ENCODE measurements at regions of chr5 and their contacts with region 1.

Region 1: GRCh38 chr5:67693956-67694809 is 497.6 kb upstream of the CD180 start:
- DNase-seq: peak; percentile 74 to 96
- H3K4me3 ChIP-seq: no peak overlapping the region
- H3K27ac ChIP-seq: peak overlapping the region; percentile 73 to 76
- H3K4me1 ChIP-seq: peaks cover 0 to 24% of the 10 kb centered on the region in 2 donors
- H3K27me3 ChIP-seq: no peaks in the 10 kb centered on the region
- CTCF ChIP-seq: no peak

Region 2: GRCh38 chr5:67246108-67246507 is 448.1 kb before region 1 on chr5:
- intact Hi-C with region 1: loop called (anchors 5 kb)
- DNase-seq: no peak
- H3K4me3 ChIP-seq: no peak overlapping the region
- H3K27ac ChIP-seq: peak overlapping the region in 1 of 2 donors; percentile 75
- H3K4me1 ChIP-seq: peaks cover 11 to 18% of the 10 kb centered on the region in 2 donors
- H3K27me3 ChIP-seq: no peaks in the 10 kb centered on the region
- CTCF ChIP-seq: peak; percentile 59 to 79 (median 67)

Region 3: DNA sequence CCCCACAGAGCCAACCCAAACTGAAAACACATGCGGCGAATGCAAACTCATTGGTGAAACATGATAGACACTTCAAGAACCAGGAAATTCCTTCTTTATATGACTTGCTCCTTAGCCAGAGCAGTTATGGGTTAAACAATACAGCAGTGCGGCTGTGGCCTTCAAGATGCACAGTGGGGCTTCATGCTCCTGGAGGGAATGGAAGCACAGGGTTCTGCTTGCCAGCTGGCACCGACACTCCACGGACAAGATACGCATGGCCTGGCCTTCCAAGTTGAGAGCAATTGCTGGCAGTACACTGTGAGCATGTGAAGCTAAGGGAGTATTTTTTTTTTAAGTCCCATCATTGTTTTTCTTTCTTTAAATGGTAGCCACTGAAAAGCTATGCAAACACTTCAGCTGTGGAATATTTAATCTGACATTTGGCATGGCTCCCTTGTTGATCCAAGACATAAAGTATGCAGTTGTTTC is 45.9 kb before region 1 on chr5:
- intact Hi-C with region 1: loop called (anchors 1 kb)
- DNase-seq: peak in 1 of 2 donors; percentile 79
- H3K4me3 ChIP-seq: no peak overlapping the region
- H3K27ac ChIP-seq: peak overlapping the region; percentile 61 to 63
- H3K4me1 ChIP-seq: peaks cover 0 to 23% of the 10 kb centered on the region in 2 donors
- H3K27me3 ChIP-seq: no peaks in the 10 kb centered on the region
- CTCF ChIP-seq: no peak

Region 4: DNA sequence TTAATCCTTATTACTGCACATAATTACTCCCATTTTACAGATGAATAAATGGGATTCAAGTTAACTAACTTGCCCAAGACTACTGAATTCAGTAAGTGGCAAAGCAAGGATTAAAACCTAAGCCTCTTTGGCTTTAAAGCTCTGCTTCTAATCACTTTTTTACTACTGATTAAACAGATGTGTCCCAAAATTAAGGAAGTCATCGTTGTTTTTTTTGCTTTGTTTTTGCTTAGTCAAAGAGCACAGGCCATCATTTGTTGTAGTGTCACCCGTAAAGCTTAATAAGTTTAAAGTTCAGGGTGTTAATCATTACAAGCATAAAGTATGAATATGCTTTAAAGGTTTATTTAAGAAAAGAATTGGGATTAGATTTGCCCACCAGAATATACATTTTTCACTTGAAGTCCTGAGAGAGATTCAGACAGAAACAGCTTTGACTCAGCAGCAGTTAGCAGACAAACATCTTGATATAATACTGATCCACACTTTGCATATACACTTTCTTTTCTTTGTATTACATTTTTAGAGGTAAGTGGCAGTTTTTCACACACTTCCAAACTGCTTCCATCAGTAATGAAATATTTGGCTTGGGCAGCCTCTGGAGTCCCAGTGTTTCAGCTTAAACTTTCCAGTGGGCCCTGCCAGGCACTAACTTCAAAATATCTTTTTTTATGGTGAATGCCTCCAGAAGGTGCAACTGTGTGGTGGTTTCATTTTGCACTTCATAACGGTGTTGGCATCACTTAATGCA is 574.1 kb after region 1 on chr5:
- intact Hi-C with region 1: loop called (anchors 5 kb)
- DNase-seq: no peak
- H3K4me3 ChIP-seq: peak overlapping the region; percentile 27 to 47
- H3K27ac ChIP-seq: peak overlapping the region; percentile 84 to 86
- H3K4me1 ChIP-seq: peaks cover 21 to 85% of the 10 kb centered on the region in 2 donors
- H3K27me3 ChIP-seq: no peaks in the 10 kb centered on the region
- CTCF ChIP-seq: no peak